ENCODE measurements at regions of chr11 and their contacts with region 1.

Region 1: GRCh38 chr11:8911029-8911826 is at the start of gene AKIP1:
- DNase-seq: peak; percentile 95

Region 2: GRCh38 chr11:8870411-8871170 is 40.6 kb before region 1 on chr11:
- CTCF ChIA-PET with region 1: no interaction called
- POLR2A ChIA-PET with region 1: interaction called, 11 read pairs
- DNase-seq: peak; percentile 71

Region 3: GRCh38 chr11:8899119-8899753 is 12.0 kb before region 1 on chr11:
- CTCF ChIA-PET with region 1: no interaction called
- POLR2A ChIA-PET with region 1: no interaction called
- DNase-seq: no peak

Region 4: GRCh38 chr11:8964324-8965320 is 53.4 kb after region 1 on chr11 and contains the start of gene TMEM9B:
- CTCF ChIA-PET with region 1: interaction called, 11 read pairs
- POLR2A ChIA-PET with region 1: interaction called, 8 read pairs
- DNase-seq: peak; percentile 81